K562 (cell line): ENCODE measurements at regions of chr5 and their contacts with region 1.

Region 1: GRCh38 chr5:116084871-116085715 is at the start of gene COMMD10:
- DNase-seq: peak; percentile 75 to 90 (median 78)
- ATAC-seq: peak; percentile 88
- H3K4me3 ChIP-seq: peak within 1 kb of the TSS; percentile 73
- H3K27ac ChIP-seq: peak within 1 kb of the TSS; percentile 95
- H3K4me1 ChIP-seq: peaks cover 10 to 13% of the 10 kb centered on the region in 2 experiments; a peak in 4 of 5 replicates
- H3K27me3 ChIP-seq: no peaks in the 10 kb centered on the region
- CTCF ChIP-seq: no peak
- EP300 ChIP-seq: no peak
- POLR2A ChIP-seq: peak; percentile 91
- RAD21 ChIP-seq: no peak
- polyA plus RNA-seq, gene COMMD10: 85.9 to 101 TPM

Region 2: DNA sequence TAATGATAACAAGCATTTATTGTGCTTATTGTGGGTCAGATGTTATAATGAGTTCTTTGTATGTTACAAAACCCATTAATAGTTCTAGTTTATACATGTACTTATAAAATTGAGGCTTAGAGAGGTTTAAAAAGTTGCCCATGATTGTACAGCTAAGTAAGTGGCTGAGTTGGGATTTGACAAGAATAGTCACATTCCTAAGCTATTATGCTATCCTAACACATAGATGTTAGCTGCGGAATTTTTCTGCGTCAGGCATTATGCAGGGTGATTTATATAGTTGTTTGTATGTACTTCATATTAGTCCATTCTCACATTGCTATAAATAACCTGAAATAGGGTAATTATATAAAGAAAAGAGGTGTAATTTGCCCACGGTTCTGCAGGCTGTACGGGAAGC is 12.2 kb after region 1 on chr5:
- CTCF ChIA-PET with region 1: no interaction called
- POLR2A ChIA-PET with region 1: interaction called, 11 read pairs
- in situ Hi-C with region 1: no loop called
- intact Hi-C with region 1: no loop called
- DNase-seq: no peak
- ATAC-seq: no peak
- H3K4me3 ChIP-seq: no peak overlapping the region
- H3K27ac ChIP-seq: no peak overlapping the region
- H3K4me1 ChIP-seq: no peaks in the 10 kb centered on the region
- H3K27me3 ChIP-seq: no peaks in the 10 kb centered on the region
- CTCF ChIP-seq: no peak
- EP300 ChIP-seq: no peak
- POLR2A ChIP-seq: no peak
- RAD21 ChIP-seq: no peak